Left cardiac atrium (tissue), 4 donors: ENCODE measurements at regions of chr7 and their contacts with region 1.

Region 1: GRCh38 chr7:39746103-39746819 is 122.9 kb downstream of the RALA start:
- DNase-seq: peak; percentile 83
- ATAC-seq: peak; percentile 84 to 92

Region 2: DNA sequence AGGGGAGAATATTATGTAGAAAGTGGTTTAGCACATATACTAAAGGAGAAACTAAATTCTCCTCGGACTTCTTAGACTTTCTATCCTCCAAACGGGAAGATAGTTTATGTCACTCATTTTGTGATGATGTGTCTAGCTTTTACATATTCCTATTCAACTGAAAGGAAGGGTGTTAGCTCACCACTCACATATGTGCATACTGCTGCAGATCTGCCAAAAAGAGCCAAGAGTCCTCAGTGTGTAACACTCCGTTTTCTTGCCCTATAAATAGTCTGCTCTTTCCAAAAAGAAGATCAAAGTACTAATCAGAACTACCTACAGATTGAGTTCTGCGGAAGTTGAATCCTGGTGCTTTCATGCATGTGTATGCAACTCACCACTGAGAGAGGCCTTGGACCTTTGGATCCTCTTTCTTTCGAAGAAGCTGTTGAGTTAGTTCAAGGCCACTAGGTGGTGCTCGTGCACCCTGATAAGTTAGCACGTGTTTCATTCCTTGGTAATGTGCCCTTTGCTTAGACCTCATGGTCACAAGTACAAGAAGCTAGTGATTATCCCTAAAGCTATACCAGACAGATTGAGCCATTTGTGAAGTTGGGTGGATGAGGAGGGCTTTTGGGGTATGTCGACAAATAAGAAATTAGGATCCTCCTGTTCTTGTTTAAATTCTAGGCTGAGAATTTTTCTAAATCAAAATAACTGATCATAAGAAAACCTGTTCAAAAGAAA is 165.9 kb before region 1 on chr7:
- intact Hi-C with region 1: loop called (anchors 1 to 2 kb)
- DNase-seq: peak; percentile 84
- ATAC-seq: peak; percentile 91 to 93

Region 3: DNA sequence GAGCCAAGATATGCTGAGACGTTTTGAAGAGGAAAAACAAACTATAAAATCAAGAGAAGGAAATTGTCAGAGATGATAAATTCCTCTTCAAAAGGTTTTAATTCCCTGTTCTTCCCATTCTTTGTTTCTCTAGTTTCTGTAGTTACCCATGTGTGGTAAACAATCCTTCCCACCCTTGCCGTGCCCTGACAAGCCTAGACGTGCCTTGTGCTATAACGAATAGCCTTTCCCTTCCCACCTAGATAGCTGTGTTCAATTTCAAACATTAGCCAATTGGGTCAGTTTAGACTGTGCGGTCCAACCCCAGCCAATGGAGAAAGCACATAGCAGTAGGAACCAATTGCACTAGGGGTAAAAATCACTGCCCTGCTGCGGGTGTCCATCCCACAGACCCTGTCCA is 15.2 kb after region 1 on chr7:
- intact Hi-C with region 1: no loop called
- DNase-seq: no peak
- ATAC-seq: no peak